Activated naive CD4-positive, alpha-beta T cell treated with anti-CD3 and anti-CD28 coated beads, Interleukin-2, amount 10 ng/mL, durations not matched to agents 7 days and 5 days (primary cell): ENCODE measurements at regions of chr15 and their contacts with region 1.

Region 1: DNA sequence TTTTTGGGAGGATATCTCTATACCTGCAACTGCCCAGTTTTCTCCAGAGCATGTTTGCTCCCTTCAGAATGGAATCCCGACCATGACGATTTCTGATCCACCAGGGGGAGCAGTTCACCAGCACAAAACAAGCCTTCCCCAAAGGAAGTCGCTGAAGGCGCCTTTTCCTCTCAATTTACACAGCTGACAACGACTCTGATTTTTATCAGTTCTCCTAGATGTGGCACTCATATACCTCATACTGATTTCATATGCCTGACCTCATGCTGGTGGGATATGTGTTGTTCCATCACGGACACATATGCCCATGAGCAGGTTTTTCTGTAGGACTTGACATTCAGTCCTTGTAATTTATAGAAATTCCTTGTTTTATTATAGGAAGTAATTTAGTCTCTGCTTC is 1028.2 kb downstream of the MCTP2 start:
- DNase-seq: peak; percentile 72
- H3K4me3 Mint-ChIP-seq: no peak overlapping the region
- H3K27ac Mint-ChIP-seq: no peak overlapping the region
- H3K4me1 Mint-ChIP-seq: peaks cover 6% of the 10 kb centered on the region
- H3K27me3 Mint-ChIP-seq: peaks cover 30% of the 10 kb centered on the region

Region 2: GRCh38 chr15:94582369-94582768 is 677.1 kb before region 1 on chr15:
- CTCF ChIA-PET with region 1: interaction called, 17 read pairs
- DNase-seq: peak; percentile 55
- H3K4me3 Mint-ChIP-seq: no peak overlapping the region
- H3K27ac Mint-ChIP-seq: no peak overlapping the region
- H3K4me1 Mint-ChIP-seq: peaks cover 24% of the 10 kb centered on the region
- H3K27me3 Mint-ChIP-seq: peaks cover 79% of the 10 kb centered on the region

Region 3: DNA sequence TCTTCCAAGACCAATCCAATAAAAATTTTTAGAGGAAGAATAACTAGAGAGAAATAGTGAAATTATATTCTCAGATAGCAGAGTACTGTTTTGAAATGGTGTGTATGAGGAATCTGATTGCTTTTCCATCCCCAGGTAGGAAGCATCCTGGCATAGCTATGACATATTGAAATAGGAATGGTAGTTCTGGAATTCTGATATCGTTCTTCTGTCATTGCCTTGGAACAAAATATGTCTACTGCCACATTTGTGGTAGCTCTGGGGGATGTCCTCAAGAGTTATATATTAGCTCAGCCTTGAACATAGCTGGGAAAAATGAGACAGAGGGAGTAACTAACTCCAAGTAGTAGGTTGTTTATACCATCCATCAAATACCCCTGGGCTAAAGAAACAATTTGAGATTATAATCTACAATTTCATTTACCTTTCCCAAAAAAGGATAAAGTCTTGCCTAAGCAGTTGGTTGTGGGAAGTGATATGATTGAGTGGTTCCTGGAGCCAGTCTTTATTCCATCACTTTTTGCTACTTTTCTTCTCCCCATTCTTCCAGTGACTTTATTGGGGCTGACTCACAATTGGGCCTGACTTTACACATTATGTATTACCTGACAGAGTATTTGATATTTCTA is 77.3 kb before region 1 on chr15:
- CTCF ChIA-PET with region 1: no interaction called
- DNase-seq: no peak
- H3K4me3 Mint-ChIP-seq: no peak overlapping the region
- H3K27ac Mint-ChIP-seq: no peak overlapping the region
- H3K4me1 Mint-ChIP-seq: no peaks in the 10 kb centered on the region
- H3K27me3 Mint-ChIP-seq: no peaks in the 10 kb centered on the region

Region 4: GRCh38 chr15:95226850-95227634 is 32.5 kb before region 1 on chr15:
- CTCF ChIA-PET with region 1: no interaction called
- DNase-seq: no peak
- H3K4me3 Mint-ChIP-seq: no peak overlapping the region
- H3K27ac Mint-ChIP-seq: no peak overlapping the region
- H3K4me1 Mint-ChIP-seq: no peaks in the 10 kb centered on the region
- H3K27me3 Mint-ChIP-seq: no peaks in the 10 kb centered on the region

Region 5: GRCh38 chr15:95291898-95292472 is 32.5 kb after region 1 on chr15:
- CTCF ChIA-PET with region 1: interaction called, 15 read pairs
- DNase-seq: no peak
- H3K4me3 Mint-ChIP-seq: no peak overlapping the region
- H3K27ac Mint-ChIP-seq: no peak overlapping the region
- H3K4me1 Mint-ChIP-seq: no peaks in the 10 kb centered on the region
- H3K27me3 Mint-ChIP-seq: peaks cover 58% of the 10 kb centered on the region